ENCODE measurements at regions of chr1 and their contacts with region 1.

Region 1: DNA sequence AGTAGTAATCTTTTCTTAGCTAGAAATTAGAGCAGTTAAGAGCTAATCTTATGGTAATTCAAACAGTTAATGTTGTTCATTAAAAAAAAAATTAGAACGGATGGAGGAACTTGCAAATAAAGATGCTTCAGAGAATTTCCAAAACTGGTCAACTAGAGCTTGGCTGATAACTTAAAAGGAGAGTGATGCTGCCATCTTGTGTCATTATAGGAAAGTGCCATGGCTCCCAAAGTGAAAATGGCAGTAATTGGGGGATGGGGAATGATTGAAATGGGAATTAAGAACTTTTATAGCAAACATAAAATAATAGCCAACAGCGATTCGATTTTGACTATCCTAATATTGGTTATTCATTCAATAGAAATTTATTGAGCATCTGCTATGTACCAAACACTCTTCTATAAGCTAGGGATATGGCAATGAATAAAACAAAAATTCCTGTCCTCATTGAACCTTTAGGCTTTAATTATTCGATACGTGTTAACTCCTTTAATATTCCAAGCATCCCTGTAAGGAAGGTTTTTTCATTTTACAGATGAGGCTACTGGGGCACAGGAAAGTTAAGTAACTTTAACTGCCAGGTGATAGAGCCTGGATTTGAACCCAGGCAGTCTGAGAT is 5.7 kb upstream of the PLPP3 start:
- DNase-seq: peak in 1 of 5 donors; percentile 53
- H3K4me3 ChIP-seq: no peak overlapping the region
- H3K27ac ChIP-seq: no peak overlapping the region
- H3K4me1 ChIP-seq: peaks cover 1% of the 10 kb centered on the region
- H3K27me3 ChIP-seq: no peaks in the 10 kb centered on the region
- CTCF ChIP-seq: peak; percentile 55 to 89 (median 82)
- EP300 ChIP-seq: no peak
- POLR2A ChIP-seq: no peak

Region 2: GRCh38 chr1:55140546-55140983 is 1444.5 kb before region 1 on chr1:
- intact Hi-C with region 1: loop called in 2 of 4 experiments (anchors 10 kb)
- DNase-seq: peak; percentile 40 to 82 (median 62)
- H3K4me3 ChIP-seq: no peak overlapping the region
- H3K27ac ChIP-seq: no peak overlapping the region
- H3K4me1 ChIP-seq: no peaks in the 10 kb centered on the region
- H3K27me3 ChIP-seq: no peaks in the 10 kb centered on the region
- CTCF ChIP-seq: peak; percentile 46 to 67 (median 63)
- EP300 ChIP-seq: peak; percentile 33
- POLR2A ChIP-seq: no peak

Region 3: GRCh38 chr1:55284852-55285251 is 1300.2 kb before region 1 on chr1:
- intact Hi-C with region 1: loop called (anchors 2 to 5 kb)
- DNase-seq: peak in 4 of 5 donors; percentile 25 to 61 (median 42)
- H3K4me3 ChIP-seq: no peak overlapping the region
- H3K27ac ChIP-seq: no peak overlapping the region
- H3K4me1 ChIP-seq: peaks cover 2% of the 10 kb centered on the region
- H3K27me3 ChIP-seq: no peaks in the 10 kb centered on the region
- CTCF ChIP-seq: peak in 2 of 3 donors; percentile 53 to 64
- EP300 ChIP-seq: no peak
- POLR2A ChIP-seq: no peak

Region 4: DNA sequence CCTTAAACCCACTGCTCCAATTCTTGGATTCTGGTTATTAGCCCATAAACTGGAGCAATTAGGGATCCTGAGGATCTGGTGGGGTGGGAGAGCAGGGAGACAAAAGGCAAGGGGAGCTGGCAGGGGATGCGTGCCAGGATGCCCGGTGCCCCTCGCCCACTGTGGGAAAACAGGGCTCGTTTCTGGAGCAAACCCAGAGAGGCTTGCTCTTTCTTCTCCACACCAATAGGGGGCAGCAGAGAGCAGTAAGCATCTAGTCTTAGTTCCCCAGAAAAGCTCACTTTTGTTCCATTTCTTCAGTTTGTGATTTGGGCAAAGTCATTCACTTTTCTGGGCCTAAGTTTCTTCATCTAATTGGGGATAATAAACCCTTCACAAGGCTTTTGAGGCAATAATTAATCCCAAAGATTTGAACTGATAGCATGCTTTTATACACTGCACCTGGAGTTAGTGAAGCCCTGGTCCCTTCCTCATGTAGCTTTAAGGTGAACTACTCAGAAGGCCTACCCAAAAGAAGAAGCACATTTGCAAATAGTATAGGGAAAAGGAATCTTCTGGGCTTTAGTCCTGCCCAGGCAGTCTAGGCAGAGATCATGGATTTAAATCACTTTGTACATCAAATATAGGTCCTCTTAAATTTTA is 1209.3 kb before region 1 on chr1:
- intact Hi-C with region 1: loop called in 1 of 4 experiments (anchors 10 kb)
- DNase-seq: peak; percentile 28 to 54 (median 40)
- H3K4me3 ChIP-seq: no peak overlapping the region
- H3K27ac ChIP-seq: no peak overlapping the region
- H3K4me1 ChIP-seq: peaks cover 10% of the 10 kb centered on the region
- H3K27me3 ChIP-seq: no peaks in the 10 kb centered on the region
- CTCF ChIP-seq: peak; percentile 62 to 69 (median 66)
- EP300 ChIP-seq: no peak
- POLR2A ChIP-seq: no peak

Region 5: GRCh38 chr1:55718758-55719671 is 866.0 kb before region 1 on chr1:
- intact Hi-C with region 1: loop called in 1 of 4 experiments (anchors 10 kb)
- DNase-seq: peak; percentile 73 to 90 (median 82)
- H3K4me3 ChIP-seq: no peak overlapping the region
- H3K27ac ChIP-seq: peak overlapping the region; percentile 66 to 88
- H3K4me1 ChIP-seq: peaks cover 27% of the 10 kb centered on the region
- H3K27me3 ChIP-seq: no peaks in the 10 kb centered on the region
- CTCF ChIP-seq: no peak
- EP300 ChIP-seq: peak; percentile 98
- POLR2A ChIP-seq: no peak

Region 6: DNA sequence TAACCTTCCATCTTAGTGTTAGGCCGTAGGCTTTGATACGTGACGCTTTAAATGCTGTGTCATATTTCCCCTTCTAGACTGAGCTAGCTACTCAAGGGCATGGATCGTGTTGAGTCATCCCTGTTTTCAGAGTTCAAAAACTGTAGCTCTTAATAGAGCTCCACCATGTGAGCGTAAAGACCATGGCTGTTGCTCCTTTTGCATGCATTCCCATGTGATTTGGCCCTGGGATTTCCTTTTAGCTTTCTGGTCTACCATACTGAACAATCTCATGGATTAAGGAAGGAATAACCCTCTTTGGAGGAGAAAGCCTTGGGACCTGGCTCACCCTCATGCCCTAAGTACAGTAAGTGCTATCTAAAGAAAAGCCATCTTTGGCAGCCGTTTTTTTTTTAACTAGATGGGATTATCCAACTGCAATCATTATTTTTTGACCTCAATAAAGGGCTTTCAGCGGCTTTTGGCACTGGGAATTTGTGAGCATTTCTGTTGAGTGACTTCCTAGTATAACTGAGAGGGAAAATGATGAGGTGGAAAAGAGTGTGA is 82.2 kb before region 1 on chr1:
- intact Hi-C with region 1: no loop called
- DNase-seq: no peak
- H3K4me3 ChIP-seq: no peak overlapping the region
- H3K27ac ChIP-seq: no peak overlapping the region
- H3K4me1 ChIP-seq: peaks cover 25% of the 10 kb centered on the region
- H3K27me3 ChIP-seq: no peaks in the 10 kb centered on the region
- CTCF ChIP-seq: no peak
- EP300 ChIP-seq: no peak
- POLR2A ChIP-seq: no peak

Region 7: DNA sequence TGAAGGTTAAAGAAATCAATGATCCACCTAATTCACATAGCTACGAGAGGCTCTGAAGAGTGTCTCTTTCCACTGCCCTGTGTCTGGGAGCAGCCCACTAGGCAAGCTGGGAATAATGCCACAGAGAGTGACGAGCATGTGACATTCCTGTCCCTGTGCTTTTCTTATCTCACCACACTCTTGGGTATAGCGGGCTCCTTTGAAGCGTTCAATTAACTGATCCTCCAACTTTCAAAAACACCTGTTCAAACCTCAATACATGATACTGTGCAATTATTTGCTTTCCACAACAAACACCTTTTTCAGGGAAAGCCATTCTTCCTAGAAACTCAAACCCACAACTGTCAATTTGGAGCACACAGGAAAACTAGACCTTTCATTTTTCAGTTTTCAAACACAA is 49.1 kb before region 1 on chr1:
- intact Hi-C with region 1: no loop called
- DNase-seq: no peak
- H3K4me3 ChIP-seq: no peak overlapping the region
- H3K27ac ChIP-seq: no peak overlapping the region
- H3K4me1 ChIP-seq: peaks cover 27% of the 10 kb centered on the region
- H3K27me3 ChIP-seq: no peaks in the 10 kb centered on the region
- CTCF ChIP-seq: no peak
- EP300 ChIP-seq: no peak
- POLR2A ChIP-seq: no peak

Region 8: DNA sequence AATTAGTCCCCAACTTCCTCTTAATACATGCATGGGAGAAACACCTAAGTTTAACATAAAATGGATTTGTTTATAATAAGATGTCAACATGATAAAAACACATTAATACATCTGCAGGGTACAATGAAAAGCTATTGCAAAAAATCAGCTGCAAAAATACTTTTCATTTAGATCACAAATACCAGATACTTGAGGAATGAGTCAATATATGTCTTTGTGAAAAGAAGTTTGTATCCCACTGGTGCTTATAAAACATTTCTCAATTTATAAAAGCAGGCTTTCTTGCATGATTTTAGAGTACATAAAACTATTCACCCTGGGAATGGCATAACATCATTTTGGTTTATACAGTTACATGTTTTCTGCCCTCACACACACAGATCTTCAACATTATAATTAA is 41.5 kb after region 1 on chr1:
- intact Hi-C with region 1: no loop called
- DNase-seq: no peak
- H3K4me3 ChIP-seq: no peak overlapping the region
- H3K27ac ChIP-seq: no peak overlapping the region
- H3K4me1 ChIP-seq: no peaks in the 10 kb centered on the region
- H3K27me3 ChIP-seq: no peaks in the 10 kb centered on the region
- CTCF ChIP-seq: no peak
- EP300 ChIP-seq: no peak
- POLR2A ChIP-seq: no peak

Measured in ovary (tissue), 10 donors.